ENCODE measurements at regions of chr21 and their contacts with region 1.

Region 1: DNA sequence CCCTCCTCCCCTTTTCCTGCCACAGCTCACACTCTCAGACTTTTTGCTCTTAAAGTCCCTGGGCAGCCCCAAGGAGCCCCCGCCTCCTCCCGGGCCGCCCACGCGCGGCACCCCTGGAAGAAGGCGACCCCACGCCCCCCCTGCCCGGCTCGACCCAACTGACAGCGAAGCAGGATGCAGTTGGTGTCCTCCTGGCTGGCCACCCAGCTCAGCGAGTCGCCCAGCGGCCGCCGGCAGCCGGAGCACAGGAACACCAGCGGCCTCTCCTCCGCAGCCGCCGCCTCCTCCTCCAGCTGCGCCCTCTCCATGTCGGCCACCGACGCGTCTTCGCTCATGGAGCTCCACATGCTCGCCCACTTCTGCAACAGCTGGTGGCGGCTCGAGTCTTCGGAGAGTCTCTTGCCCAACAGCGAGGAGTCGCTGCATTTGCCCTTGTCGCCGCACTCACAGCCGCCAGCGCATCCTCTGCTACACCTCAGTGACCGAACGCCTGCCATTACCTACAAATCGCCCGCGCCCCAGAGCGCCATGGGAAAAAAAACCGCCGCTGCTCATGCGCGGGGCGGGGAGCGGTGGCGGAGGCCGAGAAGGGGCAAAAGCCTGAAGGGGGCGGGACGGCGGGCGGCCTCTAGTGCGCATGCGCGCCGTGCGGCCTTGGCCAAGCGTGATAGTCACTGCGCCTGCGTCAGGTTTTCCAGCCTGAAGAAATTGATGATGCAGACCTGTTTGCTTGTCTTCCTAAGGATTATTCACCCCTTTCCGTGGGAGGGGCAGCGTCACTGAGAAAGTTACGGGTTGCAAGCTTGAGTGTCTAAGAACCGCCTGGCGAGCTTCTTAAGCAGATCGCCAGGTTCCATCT is at the start of gene MIS18A:
- DNase-seq: peak; percentile 98
- ATAC-seq: peak; percentile 90
- H3K4me3 Mint-ChIP-seq: peak within 1 kb of the TSS; percentile 86
- H3K27ac Mint-ChIP-seq: peak within 1 kb of the TSS; percentile 84
- H3K4me1 Mint-ChIP-seq: peaks cover 17% of the 10 kb centered on the region
- H3K27me3 Mint-ChIP-seq: no peaks in the 10 kb centered on the region
- total RNA-seq, gene MIS18A: 21.5 to 35.3 TPM

Region 2: GRCh38 chr21:31659536-31660258 is 619.0 kb before region 1 on chr21 and contains the start of gene SOD1:
- CTCF ChIA-PET with region 1: no interaction called
- POLR2A ChIA-PET with region 1: no interaction called
- intact Hi-C with region 1: loop called in 1 of 2 experiments (anchors 2 kb)
- DNase-seq: peak; percentile 97
- ATAC-seq: peak; percentile 93
- H3K4me3 Mint-ChIP-seq: peak within 1 kb of the TSS; percentile 88
- H3K27ac Mint-ChIP-seq: peak within 1 kb of the TSS; percentile 99
- H3K4me1 Mint-ChIP-seq: peaks cover 68% of the 10 kb centered on the region
- H3K27me3 Mint-ChIP-seq: no peaks in the 10 kb centered on the region
- total RNA-seq, gene SOD1: 232 to 284 TPM

Region 3: GRCh38 chr21:32099812-32100416 is 178.8 kb before region 1 on chr21:
- CTCF ChIA-PET with region 1: no interaction called
- POLR2A ChIA-PET with region 1: no interaction called
- intact Hi-C with region 1: no loop called
- DNase-seq: no peak
- ATAC-seq: no peak
- H3K4me3 Mint-ChIP-seq: no peak overlapping the region
- H3K27ac Mint-ChIP-seq: no peak overlapping the region
- H3K4me1 Mint-ChIP-seq: no peaks in the 10 kb centered on the region
- H3K27me3 Mint-ChIP-seq: peaks cover 4% of the 10 kb centered on the region

Measured in activated CD4-positive, alpha-beta T cell treated with anti-CD3 and anti-CD28 coated beads for 36 hours (primary cell).